ENCODE measurements at regions of chr4 and their contacts with region 1.

Region 1: DNA sequence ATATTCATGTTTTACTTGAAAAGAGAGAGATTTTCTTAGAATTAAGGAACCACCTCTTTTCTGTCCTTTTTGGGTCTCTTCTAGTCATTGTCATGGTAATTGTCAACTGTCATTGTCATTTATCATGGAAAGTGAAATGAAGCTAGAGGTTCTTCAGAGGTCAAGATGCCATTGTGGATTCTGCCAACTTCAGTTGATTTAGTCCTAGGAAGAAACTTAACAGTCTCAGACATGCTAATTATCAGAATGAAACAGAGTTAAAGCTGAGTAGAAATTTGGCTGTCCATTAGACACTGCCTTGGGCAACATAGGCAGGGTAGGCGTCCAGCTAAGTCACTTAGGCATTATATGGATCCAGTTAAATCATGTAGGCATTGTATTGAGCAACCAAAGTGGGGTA is 796.1 kb upstream of the ADGRL3 start:
- DNase-seq: no peak
- ATAC-seq: no peak

Region 2: GRCh38 chr4:60389633-60390032 is 14.4 kb before region 1 on chr4:
- intact Hi-C with region 1: no loop called
- DNase-seq: no peak
- ATAC-seq: no peak

Region 3: DNA sequence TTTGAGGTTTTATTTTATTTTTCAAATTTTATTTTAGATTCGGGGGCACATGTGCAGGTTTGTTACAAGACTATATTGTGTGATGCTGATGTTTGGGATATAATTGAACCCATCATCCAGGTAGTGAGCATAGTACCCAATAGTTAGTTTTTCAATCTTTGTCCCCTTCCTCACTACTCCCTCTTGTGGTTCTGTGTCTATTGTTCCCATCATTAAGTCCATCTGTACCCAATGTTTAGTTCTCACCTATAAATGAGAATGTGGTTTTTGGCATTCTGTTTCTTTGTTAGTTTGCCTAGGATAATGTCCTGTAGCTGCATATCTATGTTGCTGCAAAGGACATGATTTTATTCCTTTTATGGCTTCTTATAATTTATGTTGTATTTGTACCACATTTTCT is 28.9 kb after region 1 on chr4:
- intact Hi-C with region 1: loop called (anchors 2 kb)
- DNase-seq: no peak
- ATAC-seq: no peak

Measured in sciatic nerve (tissue), 2 donors.